ENCODE measurements at regions of chr4 and their contacts with region 1.

Region 1: GRCh38 chr4:108029731-108030130 is 40.0 kb downstream of the HADH start:
- DNase-seq: no peak
- CTCF ChIP-seq: no peak

Region 2: DNA sequence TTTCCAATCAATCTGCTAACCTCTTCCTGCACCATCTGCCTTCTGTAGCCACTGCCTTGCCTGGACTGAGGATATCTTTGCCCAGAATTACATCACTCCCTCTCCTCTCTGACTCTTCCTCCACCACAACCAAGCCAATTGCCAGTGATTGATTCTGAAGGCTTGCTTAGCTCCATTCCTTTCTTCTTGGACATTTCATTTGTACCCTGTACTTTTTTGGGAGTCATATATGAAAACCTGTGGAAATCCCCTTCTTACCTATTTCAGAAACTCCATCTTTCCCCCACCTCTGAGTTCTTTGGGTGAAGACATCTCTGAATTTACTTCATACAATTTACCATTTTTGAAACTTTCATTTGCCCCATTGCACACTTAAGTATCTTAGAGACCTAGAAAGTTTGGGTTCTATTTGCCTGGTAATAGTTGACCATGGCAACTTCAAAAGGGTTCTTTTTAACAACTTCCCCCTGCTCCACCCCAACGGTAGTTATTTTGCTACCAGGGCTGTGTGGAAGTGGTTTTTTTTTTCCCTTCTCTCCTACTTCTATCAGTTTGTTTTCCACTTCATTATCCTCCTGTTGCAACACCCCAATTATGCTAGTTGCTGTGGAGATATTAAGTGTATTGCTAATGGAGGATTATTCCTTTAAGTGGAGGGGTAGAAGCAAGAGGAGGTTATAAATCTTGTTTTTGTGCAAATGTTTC is 190.7 kb before region 1 on chr4:
- in situ Hi-C with region 1: no loop called
- DNase-seq: no peak
- CTCF ChIP-seq: no peak

Region 3: DNA sequence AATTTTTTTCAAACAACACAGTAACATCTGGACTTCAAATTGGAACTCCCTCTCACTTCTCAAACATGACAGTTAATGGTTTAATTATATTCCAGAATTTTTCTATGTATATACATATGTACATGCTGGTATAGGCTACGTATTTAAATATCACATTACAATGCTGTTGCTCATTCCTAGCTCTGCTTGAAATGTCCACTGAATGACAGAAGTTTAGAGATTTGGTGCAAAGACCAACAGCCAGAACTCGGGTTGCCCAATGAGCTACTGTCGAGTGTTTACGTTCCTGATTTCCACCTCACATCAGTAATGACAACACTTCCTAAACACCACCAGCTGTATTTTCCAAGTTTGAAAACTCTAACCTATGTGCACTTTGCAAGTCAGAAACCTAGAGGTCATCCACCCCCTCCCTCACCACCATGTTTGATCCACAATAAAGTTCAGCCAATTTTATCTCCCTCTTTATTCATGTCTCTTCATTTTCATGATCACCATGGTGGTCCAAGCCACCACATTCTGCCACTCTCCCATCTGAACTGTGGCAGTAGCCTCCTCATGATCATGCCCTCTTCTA is 541.4 kb after region 1 on chr4:
- in situ Hi-C with region 1: loop called (anchors 10 kb)
- DNase-seq: no peak
- CTCF ChIP-seq: no peak

Measured in GM13977 (cell line).